Right ventricle myocardium inferior (tissue), 1 donor: ENCODE measurements at regions of chr10 and their contacts with region 1.

Region 1: GRCh38 chr10:132036153-132036886 is 29.4 kb upstream of the JAKMIP3 start:
- DNase-seq: no peak
- ATAC-seq: peak; percentile 56

Region 2: DNA sequence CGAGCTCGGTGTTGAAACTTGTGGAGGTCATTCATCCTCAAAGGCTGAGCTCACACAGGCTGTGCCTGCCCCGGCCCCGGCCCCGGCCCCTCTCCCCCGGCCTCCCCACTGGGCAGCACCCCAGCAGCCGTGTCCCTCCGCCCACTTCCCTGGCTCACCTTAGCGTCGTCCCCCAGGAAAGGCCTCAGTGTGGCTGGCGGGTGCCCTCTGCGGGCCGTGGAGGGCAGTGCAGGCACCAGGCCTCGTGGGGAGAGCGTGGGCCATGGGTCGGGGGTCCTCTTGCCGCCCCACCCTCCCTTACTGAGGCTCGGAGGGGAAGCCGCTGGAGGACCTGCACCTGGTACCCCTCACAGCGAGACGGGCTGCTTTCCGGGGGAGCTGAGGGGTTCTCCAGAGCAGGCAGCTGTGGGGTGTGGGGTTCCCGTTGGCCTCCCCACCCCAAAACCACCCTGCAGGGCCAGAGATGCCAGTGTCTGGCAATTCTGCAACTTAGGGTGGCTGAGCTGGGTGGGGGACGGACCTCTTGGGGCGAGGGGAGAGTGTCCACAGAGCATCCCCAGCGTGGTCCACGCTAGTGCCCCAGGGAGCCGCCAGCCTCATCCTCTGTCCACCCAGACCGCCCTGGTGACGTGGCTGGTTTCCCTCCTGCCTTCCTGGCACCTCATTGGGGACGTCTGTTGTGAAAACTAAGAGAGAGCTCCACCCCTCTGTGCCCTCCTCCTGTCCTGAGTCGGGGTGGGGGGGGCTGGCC is 106.3 kb after region 1 on chr10:
- intact Hi-C with region 1: loop called (anchors 5 kb)
- DNase-seq: no peak
- ATAC-seq: peak; percentile 65